Colonic mucosa (tissue), 4 donors: ENCODE measurements at regions of chr17 and their contacts with region 1.

Region 1: GRCh38 chr17:59004338-59005111 is 102.2 kb downstream of the TRIM37 start:
- DNase-seq: peak; percentile 66
- H3K4me3 ChIP-seq: no peak overlapping the region
- H3K27ac ChIP-seq: no peak overlapping the region
- H3K4me1 ChIP-seq: no peaks in the 10 kb centered on the region
- H3K27me3 ChIP-seq: no peaks in the 10 kb centered on the region
- CTCF ChIP-seq: peak; percentile 95

Region 2: GRCh38 chr17:58587702-58588254 is 416.7 kb before region 1 on chr17:
- intact Hi-C with region 1: loop called (anchors 5 kb)
- DNase-seq: peak; percentile 40
- H3K4me3 ChIP-seq: no peak overlapping the region
- H3K27ac ChIP-seq: no peak overlapping the region
- H3K4me1 ChIP-seq: no peaks in the 10 kb centered on the region
- H3K27me3 ChIP-seq: no peaks in the 10 kb centered on the region
- CTCF ChIP-seq: peak; percentile 92

Region 3: GRCh38 chr17:58710936-58711775 is 293.4 kb before region 1 on chr17:
- intact Hi-C with region 1: loop called (anchors 2 kb)
- DNase-seq: peak; percentile 42
- H3K4me3 ChIP-seq: no peak overlapping the region
- H3K27ac ChIP-seq: no peak overlapping the region
- H3K4me1 ChIP-seq: no peaks in the 10 kb centered on the region
- H3K27me3 ChIP-seq: no peaks in the 10 kb centered on the region
- CTCF ChIP-seq: peak; percentile 79

Region 4: GRCh38 chr17:59074494-59074893 is 70.0 kb after region 1 on chr17:
- intact Hi-C with region 1: no loop called
- DNase-seq: no peak
- H3K4me3 ChIP-seq: no peak overlapping the region
- H3K27ac ChIP-seq: no peak overlapping the region
- H3K4me1 ChIP-seq: no peaks in the 10 kb centered on the region
- H3K27me3 ChIP-seq: no peaks in the 10 kb centered on the region
- CTCF ChIP-seq: no peak